Upper lobe of right lung (tissue), 1 donor: ENCODE measurements at regions of chr1 and their contacts with region 1.

Region 1: DNA sequence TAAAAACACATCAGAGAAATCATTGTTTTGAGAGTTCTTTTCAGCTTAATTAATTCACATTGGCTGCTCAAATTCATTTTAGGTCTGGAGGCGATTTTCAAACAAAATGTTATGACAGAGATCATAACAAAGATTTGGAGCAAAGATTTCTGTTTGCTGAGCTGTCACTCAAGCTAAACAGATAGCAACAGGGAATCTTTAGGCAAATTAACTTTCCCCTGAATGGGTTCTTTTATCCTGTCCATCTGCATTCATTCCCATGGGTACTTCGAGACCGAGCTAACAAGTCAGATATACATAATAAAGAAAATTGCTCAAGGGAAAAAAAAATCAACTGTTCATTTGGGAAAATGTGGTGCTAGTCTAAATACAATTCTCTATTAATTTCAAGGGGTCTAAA is 30.2 kb upstream of the CA6 start:
- DNase-seq: no peak
- ATAC-seq: no peak
- H3K4me3 ChIP-seq: no peak overlapping the region
- H3K27ac ChIP-seq: no peak overlapping the region
- H3K4me1 ChIP-seq: no peaks in the 10 kb centered on the region
- H3K27me3 ChIP-seq: no peaks in the 10 kb centered on the region
- CTCF ChIP-seq: no peak

Region 2: GRCh38 chr1:8878448-8879347 is 36.7 kb before region 1 on chr1 and contains the start of gene ENO1:
- intact Hi-C with region 1: no loop called
- DNase-seq: peak; percentile 98
- ATAC-seq: peak; percentile 94
- H3K4me3 ChIP-seq: peak within 1 kb of the TSS; percentile 90
- H3K27ac ChIP-seq: peak within 1 kb of the TSS; percentile 99
- H3K4me1 ChIP-seq: peaks cover 55% of the 10 kb centered on the region
- H3K27me3 ChIP-seq: no peaks in the 10 kb centered on the region
- CTCF ChIP-seq: no peak
- total RNA-seq, gene ENO1: 640 TPM

Region 3: GRCh38 chr1:8987881-8988617 is 72.6 kb after region 1 on chr1:
- intact Hi-C with region 1: loop called (anchors 5 kb)
- DNase-seq: peak; percentile 74
- ATAC-seq: peak; percentile 87
- H3K4me3 ChIP-seq: no peak overlapping the region
- H3K27ac ChIP-seq: peak overlapping the region; percentile 6
- H3K4me1 ChIP-seq: peaks cover 13% of the 10 kb centered on the region
- H3K27me3 ChIP-seq: no peaks in the 10 kb centered on the region
- CTCF ChIP-seq: peak; percentile 94